ENCODE measurements at regions of chr1 and their contacts with region 1.

Region 1: GRCh38 chr1:27395441-27396195 is 3.2 kb downstream of the GPR3 start:
- DNase-seq: peak; percentile 38 to 83
- H3K4me3 ChIP-seq: no peak overlapping the region
- H3K27ac ChIP-seq: no peak overlapping the region
- H3K4me1 ChIP-seq: no peaks in the 10 kb centered on the region
- H3K27me3 ChIP-seq: no peaks in the 10 kb centered on the region
- CTCF ChIP-seq: peak; percentile 82

Region 2: DNA sequence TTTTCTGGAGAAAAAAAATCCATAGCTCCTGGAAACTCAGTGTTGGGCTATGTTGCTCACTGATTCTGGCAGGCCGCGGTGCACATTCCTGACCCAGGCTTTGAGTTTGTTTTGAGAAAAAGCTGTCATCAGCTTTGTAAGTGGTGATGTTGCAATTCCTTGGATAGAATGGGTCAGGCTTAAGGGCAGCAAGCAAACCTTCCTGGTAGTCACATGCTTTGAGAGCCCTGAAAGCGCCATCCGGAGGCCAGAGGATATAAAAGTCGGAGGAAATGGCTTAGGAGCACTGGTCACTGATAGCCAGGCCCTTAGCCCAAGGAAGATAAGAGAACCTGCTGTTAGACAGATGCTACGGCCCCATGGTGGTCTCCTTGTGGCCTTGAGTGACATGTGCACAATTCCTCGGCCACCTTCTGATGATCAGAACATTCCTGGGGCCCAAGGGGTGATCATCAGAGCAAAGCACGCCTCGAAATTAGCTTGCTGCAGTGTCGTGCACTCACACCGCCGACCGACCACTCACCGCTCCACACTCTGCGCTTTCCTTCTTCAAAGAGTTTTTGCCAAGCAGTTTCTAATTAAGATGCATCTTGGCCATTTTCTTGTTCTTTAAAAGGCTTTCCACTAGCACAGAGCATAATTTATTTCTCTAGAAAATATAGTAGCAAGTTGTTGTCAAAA is 1700.4 kb before region 1 on chr1:
- CTCF ChIA-PET with region 1: no interaction called
- POLR2A ChIA-PET with region 1: no interaction called
- intact Hi-C with region 1: no loop called
- DNase-seq: peak; percentile 60 to 85
- H3K4me3 ChIP-seq: no peak overlapping the region
- H3K27ac ChIP-seq: peak overlapping the region; percentile 64
- H3K4me1 ChIP-seq: peaks cover 19% of the 10 kb centered on the region
- H3K27me3 ChIP-seq: no peaks in the 10 kb centered on the region
- CTCF ChIP-seq: no peak; the same call in 1 of the 2 replicates

Region 3: DNA sequence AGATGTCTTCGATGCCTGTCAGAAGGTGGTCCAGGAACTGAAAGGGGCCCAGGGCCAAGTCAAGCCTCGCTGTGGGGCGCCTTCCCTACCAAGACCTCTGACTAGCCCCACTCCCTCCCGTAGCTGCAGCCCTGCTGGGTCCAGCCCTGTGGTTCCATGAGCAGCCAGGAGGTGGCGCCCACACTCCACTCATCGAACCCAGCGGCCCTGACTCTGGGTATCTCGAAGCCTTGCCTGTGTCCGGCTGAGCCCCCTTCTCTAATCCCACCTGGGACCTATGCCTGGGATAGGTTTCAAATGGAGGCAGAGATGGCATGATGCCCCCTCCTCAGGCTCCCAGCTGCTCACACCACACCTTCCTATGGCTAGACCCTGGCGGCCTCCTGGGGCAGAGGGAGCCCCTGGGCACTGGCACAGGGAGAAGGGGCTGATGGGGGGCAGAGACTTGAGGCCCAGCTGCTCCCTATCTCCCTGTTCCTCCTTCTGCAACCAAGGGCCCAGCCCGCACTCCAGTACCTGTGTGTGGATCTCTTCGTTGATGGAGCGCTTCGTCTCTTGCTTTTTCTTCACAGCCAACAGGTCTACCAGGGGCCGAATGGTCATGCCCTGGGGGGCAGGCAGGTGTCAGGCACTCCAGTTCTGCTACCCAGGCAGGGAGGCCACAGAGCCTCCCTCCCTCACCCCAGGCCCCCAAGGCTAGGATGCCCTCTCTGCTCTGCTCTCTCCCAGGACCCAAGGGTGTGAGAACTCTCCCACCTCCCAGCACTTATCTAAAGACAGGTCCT is 292.7 kb before region 1 on chr1:
- CTCF ChIA-PET with region 1: interaction called, 4 read pairs
- POLR2A ChIA-PET with region 1: no interaction called
- intact Hi-C with region 1: loop called (anchors 1 kb)
- DNase-seq: peak in 1 of 2 experiments; percentile 71
- H3K4me3 ChIP-seq: no peak overlapping the region
- H3K27ac ChIP-seq: no peak overlapping the region
- H3K4me1 ChIP-seq: 0 out of 2 replicates have a peak, but pooled peaks cover 12% of the 10 kb centered on the region
- H3K27me3 ChIP-seq: no peaks in the 10 kb centered on the region
- CTCF ChIP-seq: peak; percentile 93

Region 4: GRCh38 chr1:27300341-27301051 is 95.1 kb before region 1 on chr1:
- CTCF ChIA-PET with region 1: interaction called, 9 read pairs
- POLR2A ChIA-PET with region 1: interaction called, 5 read pairs
- intact Hi-C with region 1: loop called (anchors 1 kb)
- DNase-seq: peak; percentile 43 to 80
- H3K4me3 ChIP-seq: no peak overlapping the region
- H3K27ac ChIP-seq: no peak overlapping the region
- H3K4me1 ChIP-seq: no peaks in the 10 kb centered on the region
- H3K27me3 ChIP-seq: no peaks in the 10 kb centered on the region
- CTCF ChIP-seq: peak; percentile 88

Region 5: DNA sequence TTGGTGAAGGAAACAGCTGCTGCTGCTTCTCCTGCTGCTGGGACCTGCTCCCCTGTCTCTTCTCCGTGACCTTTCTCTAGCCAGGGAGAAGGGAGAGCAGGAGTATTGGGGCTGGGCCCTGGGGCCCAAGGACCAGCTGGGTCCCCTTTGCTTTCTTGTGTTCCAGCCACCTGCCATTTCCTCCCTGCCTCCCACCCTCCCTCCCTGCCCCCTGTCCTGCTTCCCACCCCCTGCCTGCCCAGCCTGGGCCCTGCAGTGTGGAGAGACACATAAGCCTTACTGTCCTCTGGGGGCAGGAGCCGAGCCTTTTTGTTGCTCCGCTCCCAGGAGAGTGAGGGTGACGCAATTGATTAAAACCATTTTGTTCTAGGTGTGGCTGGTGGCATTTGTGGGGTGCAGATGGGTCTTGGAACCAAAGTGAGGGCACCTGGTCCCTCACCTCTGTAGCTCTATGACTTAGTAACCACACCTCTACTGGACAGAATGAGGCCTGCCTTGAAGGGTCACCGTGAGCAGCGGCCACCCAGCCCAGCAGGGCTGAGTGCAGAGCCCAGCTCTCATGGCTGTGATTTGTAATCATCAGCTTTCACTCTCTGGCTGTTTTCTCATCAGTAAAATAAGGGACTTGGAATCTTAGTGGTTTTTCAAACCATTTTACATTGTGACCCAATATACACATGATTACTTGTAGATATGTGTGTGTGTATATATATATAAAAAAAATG is 87.6 kb before region 1 on chr1:
- CTCF ChIA-PET with region 1: interaction called, 10 read pairs
- POLR2A ChIA-PET with region 1: no interaction called
- intact Hi-C with region 1: no loop called
- DNase-seq: no peak
- H3K4me3 ChIP-seq: no peak overlapping the region
- H3K27ac ChIP-seq: no peak overlapping the region
- H3K4me1 ChIP-seq: no peaks in the 10 kb centered on the region
- H3K27me3 ChIP-seq: no peaks in the 10 kb centered on the region
- CTCF ChIP-seq: no peak

Region 6: DNA sequence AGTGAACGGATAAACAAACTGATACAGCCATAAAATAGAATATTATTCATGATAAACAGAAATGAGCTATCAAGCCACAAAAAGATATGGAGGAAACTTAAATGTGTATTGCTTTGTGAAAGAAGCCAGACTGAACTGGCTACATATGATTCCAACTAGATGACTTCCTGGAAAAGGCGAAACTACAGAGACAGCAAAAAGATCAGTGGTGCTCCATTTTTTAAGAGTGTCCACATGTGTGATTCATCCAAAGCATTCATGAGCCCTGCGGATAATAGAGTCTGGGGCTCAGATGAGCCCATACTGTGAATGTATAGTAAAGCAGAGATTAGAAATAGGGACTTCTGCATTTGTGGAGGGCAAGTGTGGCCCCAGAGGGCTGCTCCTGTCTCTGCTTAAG is 81.4 kb before region 1 on chr1:
- CTCF ChIA-PET with region 1: interaction called, 12 read pairs
- POLR2A ChIA-PET with region 1: no interaction called
- intact Hi-C with region 1: no loop called
- DNase-seq: no peak
- H3K4me3 ChIP-seq: no peak overlapping the region
- H3K27ac ChIP-seq: no peak overlapping the region
- H3K4me1 ChIP-seq: no peaks in the 10 kb centered on the region
- H3K27me3 ChIP-seq: no peaks in the 10 kb centered on the region
- CTCF ChIP-seq: no peak

Region 7: GRCh38 chr1:27436204-27437159 is 40.9 kb after region 1 on chr1:
- CTCF ChIA-PET with region 1: no interaction called
- POLR2A ChIA-PET with region 1: no interaction called
- intact Hi-C with region 1: no loop called
- DNase-seq: peak; percentile 10 to 70
- H3K4me3 ChIP-seq: peak overlapping the region; percentile 14; the same call in 1 of the 2 replicates
- H3K27ac ChIP-seq: peak overlapping the region; percentile 69
- H3K4me1 ChIP-seq: peaks cover 32% of the 10 kb centered on the region
- H3K27me3 ChIP-seq: no peaks in the 10 kb centered on the region
- CTCF ChIP-seq: no peak

Region 8: DNA sequence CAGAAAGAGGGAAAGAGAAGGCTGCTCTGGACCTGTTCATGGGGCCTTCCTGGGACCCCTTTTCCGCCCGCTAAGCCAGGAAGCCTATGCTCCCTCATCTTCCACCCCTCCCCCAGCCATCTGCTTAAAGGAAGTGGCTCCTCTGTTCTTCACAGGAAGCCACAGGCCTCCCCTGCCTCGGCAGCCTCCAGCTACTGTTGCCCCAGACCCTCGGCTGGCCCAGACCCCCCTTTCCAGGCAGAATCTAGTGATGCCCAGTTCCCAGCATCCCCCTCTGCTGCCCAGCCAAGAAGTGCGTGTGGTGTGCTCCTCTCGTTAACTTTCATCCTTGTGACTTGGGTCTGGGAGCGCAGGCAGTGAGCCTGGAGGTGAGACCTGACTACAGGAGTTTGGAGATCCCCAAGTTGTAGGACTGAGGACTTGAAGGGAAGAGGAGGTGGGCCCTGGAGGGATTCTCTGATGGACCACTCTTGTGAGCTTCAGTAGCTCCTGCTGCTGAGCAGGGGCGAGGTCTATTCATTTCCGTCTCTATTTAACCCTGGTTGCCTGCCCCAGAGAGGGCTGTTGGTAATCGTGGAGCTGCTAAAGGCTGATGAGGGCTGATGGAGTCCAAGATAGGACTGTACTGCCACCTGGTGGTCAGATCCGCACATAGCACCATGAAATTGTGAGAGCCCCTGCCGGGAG is 267.2 kb after region 1 on chr1:
- CTCF ChIA-PET with region 1: interaction called, 3 read pairs
- POLR2A ChIA-PET with region 1: no interaction called
- intact Hi-C with region 1: loop called (anchors 5 kb)
- DNase-seq: peak; percentile 53 to 78
- H3K4me3 ChIP-seq: no peak overlapping the region
- H3K27ac ChIP-seq: no peak overlapping the region
- H3K4me1 ChIP-seq: peaks cover 9% of the 10 kb centered on the region; the same call in 1 of the 2 replicates
- H3K27me3 ChIP-seq: no peaks in the 10 kb centered on the region
- CTCF ChIP-seq: peak; percentile 84